ENCODE measurements at regions of chr2 and their contacts with region 1.

Region 1: DNA sequence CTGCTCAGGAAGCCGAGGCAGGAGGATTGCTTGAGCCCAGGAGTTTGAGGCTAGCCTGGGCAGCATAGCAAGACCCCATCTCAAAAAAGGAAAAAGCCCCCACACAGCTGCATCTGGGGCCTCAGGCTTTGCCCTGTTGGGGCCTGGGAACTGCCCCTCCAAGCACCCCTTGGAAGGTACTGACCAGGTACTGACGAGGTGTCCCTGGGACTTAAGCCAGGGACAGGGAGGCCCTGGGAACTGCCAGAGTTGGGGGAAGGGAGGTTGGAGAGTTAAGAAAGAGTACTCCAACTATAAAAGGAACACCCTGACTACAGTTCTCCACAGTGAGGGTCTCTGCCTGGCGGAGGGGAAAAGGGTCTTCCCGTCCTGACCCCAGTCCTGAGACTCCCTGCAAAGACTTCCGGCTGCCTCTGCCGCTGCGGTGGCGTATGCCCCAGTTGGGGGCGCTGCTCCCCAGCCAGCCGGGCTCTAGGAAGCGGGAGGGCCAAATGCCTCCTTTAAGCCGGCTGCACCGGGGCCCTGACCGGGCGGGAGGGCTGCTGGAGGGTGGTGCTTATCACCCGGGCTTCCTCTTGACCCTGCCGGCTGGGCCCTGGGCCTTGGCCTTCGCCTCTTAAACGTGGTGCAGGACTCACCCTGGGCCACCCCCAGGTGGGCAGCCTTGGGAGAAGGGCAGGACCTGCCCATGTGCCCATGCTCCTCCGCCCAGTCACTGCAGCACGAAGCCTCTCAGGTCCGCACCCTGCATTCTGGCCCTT is 12.8 kb downstream of the SLC30A3 start:
- DNase-seq: no peak

Region 2: DNA sequence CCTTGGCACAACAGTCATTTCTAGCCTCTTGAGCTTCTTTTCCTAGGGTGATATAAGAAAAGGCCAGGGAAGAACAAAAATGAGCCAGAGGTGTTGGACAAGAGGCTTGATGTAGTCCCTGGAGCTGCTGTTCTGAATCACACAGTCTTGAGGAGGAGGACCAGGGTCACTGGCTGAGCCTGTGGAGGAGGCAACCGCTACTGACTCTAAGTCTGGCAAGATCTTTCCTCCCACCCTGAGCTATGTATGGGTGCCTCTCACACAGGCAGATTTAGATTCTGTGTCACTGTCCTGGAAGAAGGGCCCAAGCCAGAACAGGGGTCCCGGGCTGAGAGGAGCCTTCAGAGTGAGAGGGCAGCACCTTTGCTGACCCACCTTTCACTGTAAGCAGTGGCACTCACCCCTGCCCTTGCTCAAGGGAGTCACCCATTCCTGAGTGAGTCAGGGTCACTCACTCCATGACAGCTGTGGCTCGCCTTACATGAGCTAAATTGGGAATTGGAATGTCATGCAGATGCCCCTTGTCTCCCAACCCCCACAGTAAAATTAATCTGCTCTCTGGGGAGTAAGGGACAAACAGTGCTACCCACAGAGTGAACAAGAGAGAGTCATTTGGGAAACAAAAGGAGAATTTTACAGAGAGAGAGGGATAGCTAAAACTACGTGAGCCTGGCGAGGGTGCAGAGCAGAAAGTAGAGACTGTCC is 31.9 kb after region 1 on chr2 and contains the start of gene TRIM54:
- intact Hi-C with region 1: loop called (anchors 2 kb)
- DNase-seq: no peak
- total RNA-seq, gene TRIM54: 218 TPM

Region 3: GRCh38 chr2:27303093-27304025 is 53.3 kb after region 1 on chr2:
- intact Hi-C with region 1: loop called (anchors 5 kb)
- DNase-seq: no peak

Measured in cardiac septum (tissue), 1 donor.